CD4-positive, alpha-beta memory T cell (primary cell): ENCODE measurements at regions of chr10 and their contacts with region 1.

Region 1: DNA sequence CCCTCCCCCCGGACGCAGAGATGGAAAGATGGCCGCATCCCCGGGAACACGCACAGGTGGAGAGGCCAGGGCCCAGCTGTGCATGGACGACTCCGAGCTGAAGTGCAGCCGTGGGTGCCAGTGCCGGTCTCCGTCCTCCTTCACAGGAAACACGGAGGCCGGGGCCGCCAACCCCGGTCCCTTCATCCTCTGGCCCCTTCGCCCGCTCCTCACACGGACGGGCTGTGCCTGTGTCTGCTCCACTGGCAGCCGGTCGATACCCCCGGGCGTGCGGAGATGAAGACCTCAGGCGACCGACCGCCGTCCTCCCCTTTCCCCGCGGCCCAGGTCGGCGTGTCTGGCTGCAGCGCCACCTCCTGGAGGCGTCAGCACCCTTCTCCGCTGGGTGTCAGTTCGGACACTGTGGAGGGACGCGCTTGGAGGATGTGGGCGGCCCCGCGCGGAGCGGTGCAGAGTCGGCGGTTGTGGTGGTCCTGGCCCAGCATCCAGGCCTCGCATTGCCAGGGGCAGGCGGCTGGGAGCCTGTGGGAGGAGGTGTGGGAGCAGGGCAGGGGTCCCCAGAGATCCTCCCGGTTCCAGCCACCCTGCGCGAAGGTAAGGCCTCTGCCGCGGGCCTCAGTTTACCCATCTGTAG is 9.9 kb downstream of the ZNF511 start:
- DNase-seq: peak; percentile 58 to 70 (median 61)
- H3K4me3 ChIP-seq: peak overlapping the region in 1 of 2 donors; percentile 32
- H3K4me3 Mint-ChIP-seq: peak overlapping the region; percentile 27 to 80 (median 70)
- H3K27ac ChIP-seq: no peak overlapping the region
- H3K27ac Mint-ChIP-seq: peak overlapping the region in 2 of 7 donors; percentile 36 to 77
- H3K4me1 ChIP-seq: peaks cover 9% of the 10 kb centered on the region
- H3K4me1 Mint-ChIP-seq: peaks cover 7 to 14% (median 13%) of the 10 kb centered on the region in 4 donors
- H3K27me3 ChIP-seq: no peaks in the 10 kb centered on the region
- H3K27me3 Mint-ChIP-seq: peaks cover 0 to 6% of the 10 kb centered on the region in 2 donors

Region 2: DNA sequence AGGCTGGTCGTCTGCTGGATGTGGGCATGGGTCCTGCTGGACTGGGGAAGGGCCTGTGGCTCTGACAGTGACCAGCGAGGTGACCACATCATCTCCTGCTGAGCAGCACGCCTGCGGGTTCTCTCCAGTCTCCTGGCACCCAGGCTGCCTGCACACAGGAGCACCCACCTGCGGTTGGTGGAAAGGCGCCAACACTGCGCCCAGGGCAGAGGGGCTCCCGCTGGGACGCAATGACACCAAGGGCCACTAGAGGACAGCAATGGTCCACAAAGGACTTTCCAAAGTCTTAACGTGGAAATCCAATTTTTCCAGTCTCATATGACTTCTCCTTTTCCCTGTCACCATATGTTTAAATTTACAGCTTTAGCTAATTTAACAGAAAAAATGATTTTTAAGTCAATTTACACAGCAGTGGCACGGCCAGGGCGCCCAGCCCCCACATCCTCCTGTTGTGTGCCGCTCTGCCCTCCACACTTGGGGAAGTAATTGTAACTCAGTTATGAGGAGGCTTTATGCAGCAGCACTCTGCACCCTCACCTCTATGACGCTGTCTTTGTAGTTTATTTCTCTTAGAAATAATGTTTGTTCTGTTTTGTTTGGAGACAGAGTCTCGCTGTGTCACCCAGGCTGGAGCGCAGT is 414.3 kb before region 1 on chr10:
- CTCF ChIA-PET with region 1: interaction called, 3 read pairs
- POLR2A ChIA-PET with region 1: no interaction called
- intact Hi-C with region 1: loop called (anchors 10 kb)
- DNase-seq: peak in 1 of 5 donors; percentile 8
- H3K4me3 ChIP-seq: no peak overlapping the region
- H3K4me3 Mint-ChIP-seq: no peak overlapping the region
- H3K27ac ChIP-seq: no peak overlapping the region
- H3K27ac Mint-ChIP-seq: no peak overlapping the region
- H3K4me1 ChIP-seq: peaks cover 4% of the 10 kb centered on the region
- H3K4me1 Mint-ChIP-seq: peaks cover 0 to 5% (median 2%) of the 10 kb centered on the region in 4 donors
- H3K27me3 ChIP-seq: no peaks in the 10 kb centered on the region
- H3K27me3 Mint-ChIP-seq: peaks cover 2 to 8% of the 10 kb centered on the region in 2 donors

Region 3: DNA sequence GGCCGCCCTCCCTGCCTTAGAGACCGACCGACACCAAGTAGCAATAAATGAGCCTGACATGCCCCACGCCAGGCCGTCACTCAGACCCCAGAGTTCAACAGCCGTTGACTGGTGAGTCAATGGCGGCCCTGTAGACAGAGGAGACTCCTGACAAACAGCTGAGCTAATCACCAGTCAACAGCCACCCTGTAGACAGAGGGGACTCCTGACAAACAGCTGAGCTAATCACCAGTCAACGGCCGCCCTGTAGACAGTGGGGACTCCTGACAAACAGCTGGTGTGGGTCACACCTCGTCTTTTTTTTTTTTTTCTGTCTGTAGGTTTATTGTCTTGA is 175.4 kb before region 1 on chr10:
- CTCF ChIA-PET with region 1: interaction called, 12 read pairs
- POLR2A ChIA-PET with region 1: no interaction called
- intact Hi-C with region 1: no loop called
- DNase-seq: no peak
- H3K4me3 ChIP-seq: no peak overlapping the region
- H3K4me3 Mint-ChIP-seq: no peak overlapping the region
- H3K27ac ChIP-seq: no peak overlapping the region
- H3K27ac Mint-ChIP-seq: no peak overlapping the region
- H3K4me1 ChIP-seq: no peaks in the 10 kb centered on the region
- H3K4me1 Mint-ChIP-seq: peaks cover 4 to 11% (median 7%) of the 10 kb centered on the region in 4 donors
- H3K27me3 ChIP-seq: no peaks in the 10 kb centered on the region
- H3K27me3 Mint-ChIP-seq: peaks cover 27 to 35% of the 10 kb centered on the region in 2 donors

Region 4: GRCh38 chr10:133245439-133246235 is 73.0 kb before region 1 on chr10:
- CTCF ChIA-PET with region 1: interaction called, 3 read pairs
- POLR2A ChIA-PET with region 1: no interaction called
- intact Hi-C with region 1: loop called (anchors 2 kb)
- DNase-seq: no peak
- H3K4me3 ChIP-seq: no peak overlapping the region
- H3K4me3 Mint-ChIP-seq: no peak overlapping the region
- H3K27ac ChIP-seq: no peak overlapping the region
- H3K27ac Mint-ChIP-seq: no peak overlapping the region
- H3K4me1 ChIP-seq: peaks cover 15% of the 10 kb centered on the region
- H3K4me1 Mint-ChIP-seq: peaks cover 12 to 19% (median 17%) of the 10 kb centered on the region in 4 donors
- H3K27me3 ChIP-seq: peaks cover 10% of the 10 kb centered on the region
- H3K27me3 Mint-ChIP-seq: peaks cover 21 to 22% of the 10 kb centered on the region in 2 donors